ENCODE measurements at regions of chr11 and their contacts with region 1.

Region 1: DNA sequence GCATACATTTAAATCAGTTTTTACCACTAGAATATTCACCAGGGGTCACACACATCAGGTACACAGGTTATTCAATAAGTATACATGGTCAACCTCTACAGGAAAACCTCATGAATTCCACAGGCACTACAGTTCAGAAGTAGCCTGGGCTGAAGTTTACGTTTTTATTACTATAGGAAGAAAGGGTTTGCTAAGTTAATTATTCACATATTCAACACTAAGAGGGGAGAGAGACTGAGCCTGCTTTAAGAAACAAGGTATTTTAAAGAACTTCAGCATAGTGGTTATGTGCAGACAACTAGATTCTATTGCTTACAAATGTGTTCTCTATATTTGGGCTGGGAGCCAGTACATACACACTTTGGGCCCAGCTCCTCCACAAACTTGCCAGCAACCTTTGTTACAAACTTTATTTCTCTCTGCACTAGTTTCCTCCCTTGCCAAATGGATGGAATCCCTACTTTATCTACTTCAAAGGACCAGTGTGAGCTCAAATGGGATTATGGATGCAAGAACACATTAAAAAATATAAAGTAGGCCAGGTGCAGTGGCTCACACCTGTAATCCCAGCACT is 31.9 kb downstream of the IL18BP start:
- DNase-seq: no peak
- H3K4me3 ChIP-seq: no peak overlapping the region
- H3K27ac ChIP-seq: no peak overlapping the region
- H3K4me1 ChIP-seq: no peaks in the 10 kb centered on the region
- H3K27me3 ChIP-seq: no peaks in the 10 kb centered on the region
- CTCF ChIP-seq: no peak
- EP300 ChIP-seq: no peak
- POLR2A ChIP-seq: no peak
- RAD21 ChIP-seq: no peak

Region 2: GRCh38 chr11:71995726-71996291 is 34.8 kb before region 1 on chr11:
- CTCF ChIA-PET with region 1: no interaction called
- POLR2A ChIA-PET with region 1: no interaction called
- DNase-seq: no peak
- H3K4me3 ChIP-seq: no peak overlapping the region
- H3K27ac ChIP-seq: no peak overlapping the region
- H3K4me1 ChIP-seq: no peaks in the 10 kb centered on the region
- H3K27me3 ChIP-seq: no peaks in the 10 kb centered on the region
- CTCF ChIP-seq: no peak
- EP300 ChIP-seq: no peak
- POLR2A ChIP-seq: no peak
- RAD21 ChIP-seq: no peak

Region 3: GRCh38 chr11:72015511-72016171 is 14.9 kb before region 1 on chr11:
- CTCF ChIA-PET with region 1: interaction called, 106 read pairs
- POLR2A ChIA-PET with region 1: interaction called, 3 read pairs
- DNase-seq: no peak
- H3K4me3 ChIP-seq: no peak overlapping the region
- H3K27ac ChIP-seq: no peak overlapping the region
- H3K4me1 ChIP-seq: no peaks in the 10 kb centered on the region
- H3K27me3 ChIP-seq: no peaks in the 10 kb centered on the region
- CTCF ChIP-seq: peak; percentile 45 to 62 (median 57)
- EP300 ChIP-seq: no peak
- POLR2A ChIP-seq: no peak
- RAD21 ChIP-seq: peak; percentile 24 to 42; a peak in 3 of 4 replicates

Region 4: GRCh38 chr11:72048766-72049456 is 18.4 kb after region 1 on chr11:
- CTCF ChIA-PET with region 1: interaction called, 18 read pairs
- POLR2A ChIA-PET with region 1: interaction called, 6 read pairs
- DNase-seq: no peak
- H3K4me3 ChIP-seq: no peak overlapping the region
- H3K27ac ChIP-seq: peak overlapping the region; percentile 62; the same call in 1 of the 2 replicates
- H3K4me1 ChIP-seq: peaks cover 0 to 8% (median 0%) of the 10 kb centered on the region in 4 experiments; a peak in 1 of 7 replicates
- H3K27me3 ChIP-seq: no peaks in the 10 kb centered on the region
- CTCF ChIP-seq: no peak
- EP300 ChIP-seq: no peak
- POLR2A ChIP-seq: no peak
- RAD21 ChIP-seq: no peak

Region 5: DNA sequence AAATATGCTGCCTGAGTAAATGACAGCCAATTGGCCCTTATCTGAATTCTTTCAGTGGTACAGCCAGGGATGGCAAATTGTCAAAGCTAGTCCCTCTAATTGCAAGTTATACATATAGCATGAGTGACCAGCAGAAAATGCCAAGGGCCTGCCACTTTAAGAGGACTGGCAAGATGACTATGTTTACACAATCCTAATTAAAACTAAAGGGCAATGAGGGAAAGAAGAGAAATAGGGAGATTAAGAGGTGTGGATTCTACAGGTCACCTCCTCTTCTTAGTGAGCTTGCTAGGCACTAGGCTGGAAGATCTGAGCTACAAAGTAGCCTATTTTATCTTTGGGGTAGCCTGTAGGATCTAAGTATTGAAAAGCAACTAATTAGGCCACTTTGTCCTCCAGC is 36.3 kb after region 1 on chr11:
- CTCF ChIA-PET with region 1: interaction called, 18 read pairs
- POLR2A ChIA-PET with region 1: interaction called, 3 read pairs
- DNase-seq: no peak
- H3K4me3 ChIP-seq: no peak overlapping the region
- H3K27ac ChIP-seq: no peak overlapping the region
- H3K4me1 ChIP-seq: peaks cover 0 to 3% (median under 1%) of the 10 kb centered on the region in 4 experiments; a peak in 2 of 7 replicates
- H3K27me3 ChIP-seq: no peaks in the 10 kb centered on the region
- CTCF ChIP-seq: no peak
- EP300 ChIP-seq: no peak
- POLR2A ChIP-seq: no peak
- RAD21 ChIP-seq: no peak

Region 6: DNA sequence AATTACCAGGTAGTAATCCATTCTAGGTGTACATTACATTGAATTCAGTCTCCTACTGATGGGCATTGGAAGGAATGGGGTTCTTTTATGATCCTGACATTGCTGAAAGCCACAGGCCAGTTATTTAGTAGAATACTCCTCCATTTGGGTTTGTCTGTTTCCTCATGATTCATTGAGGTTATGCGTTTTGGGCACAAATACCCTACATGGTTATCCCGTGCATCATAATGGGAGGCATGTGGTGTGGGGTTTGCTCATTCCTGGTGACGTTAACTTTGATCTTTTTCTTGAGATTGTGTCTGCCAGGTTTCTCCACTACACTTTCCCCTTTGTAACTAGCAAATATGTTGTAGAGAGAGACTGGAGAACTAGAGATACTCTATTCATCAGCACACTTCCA is 110.5 kb after region 1 on chr11:
- CTCF ChIA-PET with region 1: interaction called, 12 read pairs
- POLR2A ChIA-PET with region 1: no interaction called
- DNase-seq: no peak
- H3K4me3 ChIP-seq: no peak overlapping the region
- H3K27ac ChIP-seq: no peak overlapping the region
- H3K4me1 ChIP-seq: no peaks in the 10 kb centered on the region
- H3K27me3 ChIP-seq: no peaks in the 10 kb centered on the region
- CTCF ChIP-seq: no peak
- EP300 ChIP-seq: no peak
- POLR2A ChIP-seq: no peak
- RAD21 ChIP-seq: no peak

Region 7: DNA sequence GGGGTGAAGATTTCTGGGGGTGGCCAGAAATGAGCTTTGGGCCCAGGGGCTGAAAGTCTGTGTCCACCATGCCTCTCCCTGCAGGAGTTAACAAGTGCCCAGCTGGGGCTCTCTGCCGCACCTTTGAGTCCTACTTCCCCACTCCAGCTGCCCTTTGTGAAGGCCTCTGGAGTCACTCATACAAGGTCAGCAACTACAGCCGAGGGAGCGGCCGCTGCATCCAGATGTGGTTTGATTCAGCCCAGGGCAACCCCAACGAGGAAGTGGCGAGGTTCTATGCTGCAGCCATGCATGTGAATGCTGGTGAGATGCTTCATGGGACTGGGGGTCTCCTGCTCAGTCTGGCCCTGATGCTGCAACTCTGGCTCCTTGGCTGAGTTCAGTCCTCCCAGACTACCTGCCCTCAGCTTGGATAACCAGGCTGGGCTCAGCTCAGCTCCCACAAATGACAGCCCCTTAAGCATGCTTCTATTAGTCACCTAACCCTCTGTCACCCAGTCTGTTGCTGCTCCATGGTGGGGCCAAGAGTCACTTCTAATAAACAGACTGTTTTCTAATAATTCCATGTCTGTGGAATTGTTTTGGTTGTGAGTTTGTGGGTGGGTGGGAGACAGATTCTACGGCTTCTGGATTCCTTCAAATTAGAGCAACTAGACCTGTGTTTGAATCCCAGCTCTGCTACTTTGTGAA is 191.0 kb after region 1 on chr11:
- CTCF ChIA-PET with region 1: no interaction called
- POLR2A ChIA-PET with region 1: no interaction called
- DNase-seq: peak in 1 of 2 experiments; percentile 35
- H3K4me3 ChIP-seq: no peak overlapping the region
- H3K27ac ChIP-seq: no peak overlapping the region
- H3K4me1 ChIP-seq: peaks cover 10 to 11% (median 11%) of the 10 kb centered on the region in 4 experiments; a peak in 6 of 7 replicates
- H3K27me3 ChIP-seq: no peaks in the 10 kb centered on the region; a peak in 2 of 7 replicates
- CTCF ChIP-seq: no peak
- EP300 ChIP-seq: no peak
- POLR2A ChIP-seq: no peak
- RAD21 ChIP-seq: no peak

Region 8: DNA sequence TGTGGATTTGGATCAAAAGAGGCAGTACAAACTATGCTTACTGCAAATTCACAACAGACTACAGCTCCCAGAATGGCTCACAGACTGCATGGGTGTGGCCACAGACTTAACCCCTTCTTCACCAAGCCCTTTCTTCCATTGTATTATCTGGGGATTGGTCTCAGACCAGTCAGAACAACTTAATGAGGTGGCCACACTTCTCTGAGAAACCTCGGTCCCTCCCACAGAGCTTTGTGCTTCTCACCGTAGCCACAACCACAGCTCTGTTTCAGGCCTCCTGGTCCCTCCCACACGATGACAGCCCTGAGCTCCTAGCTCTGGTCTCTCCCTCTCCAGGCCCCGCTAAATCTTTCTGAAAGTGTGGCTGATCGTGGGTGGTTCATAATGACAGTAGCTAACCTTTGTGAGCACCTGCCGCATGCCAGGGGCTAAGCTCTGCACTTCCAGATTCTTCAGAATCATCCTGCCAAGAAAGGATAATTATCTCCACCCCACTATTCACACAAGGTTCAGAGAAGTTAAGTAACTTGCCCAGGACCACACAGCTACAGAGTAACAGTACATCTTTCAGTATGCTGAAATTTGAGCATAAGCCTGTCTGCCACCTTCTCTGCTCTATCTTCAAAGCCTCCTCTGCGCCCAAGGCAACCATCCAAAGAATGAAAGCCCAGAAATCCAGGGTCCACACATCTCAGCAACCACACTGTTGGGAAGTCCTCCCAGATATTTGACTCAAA is 638.2 kb after region 1 on chr11:
- CTCF ChIA-PET with region 1: no interaction called
- POLR2A ChIA-PET with region 1: no interaction called
- DNase-seq: no peak
- H3K4me3 ChIP-seq: no peak overlapping the region
- H3K27ac ChIP-seq: no peak overlapping the region
- H3K4me1 ChIP-seq: peaks cover 0 to 13% (median 7%) of the 10 kb centered on the region in 4 experiments; a peak in 6 of 7 replicates
- H3K27me3 ChIP-seq: peaks cover 0 to 8% (median under 1%) of the 10 kb centered on the region in 4 experiments; a peak in 4 of 7 replicates
- CTCF ChIP-seq: no peak
- EP300 ChIP-seq: no peak
- POLR2A ChIP-seq: no peak
- RAD21 ChIP-seq: no peak

Measured in H1 (cell line).